Endothelial cell of umbilical vein (primary cell): ENCODE measurements at regions of chr4 and their contacts with region 1.

Region 1: DNA sequence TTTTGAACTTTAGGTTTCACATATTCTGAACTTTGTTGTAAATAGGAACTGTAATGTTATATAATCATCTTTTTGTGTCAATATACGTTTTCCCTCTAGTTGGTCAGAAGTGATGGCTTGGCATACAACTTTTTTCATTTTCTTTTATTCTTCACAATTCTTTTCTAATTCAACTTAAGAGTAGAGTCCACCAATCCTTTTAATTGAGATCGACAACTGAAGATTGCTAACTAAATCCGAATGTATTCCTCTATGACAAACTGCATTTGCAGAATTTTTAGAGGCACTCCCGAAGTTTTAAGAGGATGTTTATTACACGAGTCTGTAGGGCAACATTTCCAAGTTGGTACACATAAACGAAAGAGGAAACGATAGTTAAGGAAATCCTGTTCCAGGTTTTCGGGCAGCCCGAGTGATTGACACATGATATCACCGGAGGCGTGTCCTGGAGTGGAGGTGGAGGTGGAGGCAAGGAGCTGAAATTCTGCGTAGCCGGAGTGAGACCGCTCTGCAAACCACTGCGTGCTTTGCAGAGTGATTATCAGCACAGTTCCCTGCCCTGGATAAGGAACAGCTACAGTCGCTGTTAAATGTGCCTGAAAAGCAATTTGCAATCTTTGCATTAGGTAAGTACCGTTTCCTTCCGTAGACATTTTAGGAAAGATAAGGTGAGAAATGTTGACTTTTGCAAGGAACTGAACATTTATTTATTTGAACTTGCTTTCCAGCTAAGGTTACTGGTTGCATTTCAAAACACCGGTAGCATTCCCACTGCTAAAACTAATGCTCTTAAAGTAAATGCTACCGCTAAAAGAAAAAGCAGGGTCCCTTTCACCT is at the start of gene SPRY1:
- DNase-seq: peak; percentile 89
- H3K4me3 ChIP-seq: peak within 1 kb of the TSS; percentile 27 to 84 (median 49)
- H3K27ac ChIP-seq: peak within 1 kb of the TSS; percentile 53
- H3K4me1 ChIP-seq: peaks cover 15% of the 10 kb centered on the region
- H3K27me3 ChIP-seq: no peaks in the 10 kb centered on the region
- CTCF ChIP-seq: no peak
- POLR2A ChIP-seq: peak; percentile 68
- total RNA-seq, gene SPRY1: 43.7 and 59.6 TPM in 2 replicates

Region 2: DNA sequence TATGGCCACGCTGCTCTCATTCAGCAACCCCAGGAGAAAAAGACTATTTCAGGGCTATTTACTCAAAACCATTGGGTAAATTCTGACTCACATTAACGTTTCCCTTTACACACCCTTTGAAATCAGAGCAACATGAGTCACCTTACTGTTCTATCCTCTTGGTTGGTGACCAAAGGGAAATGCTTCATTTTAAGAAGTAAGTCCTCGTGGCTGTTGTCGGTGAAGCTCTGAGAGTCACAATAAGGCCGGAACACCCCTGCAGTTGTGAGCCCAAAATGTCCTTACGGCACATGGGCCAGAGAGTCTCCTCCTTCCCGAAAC is 56.2 kb before region 1 on chr4:
- CTCF ChIA-PET with region 1: interaction called, 3 read pairs
- POLR2A ChIA-PET with region 1: no interaction called
- dilution Hi-C with region 1: no loop called
- intact Hi-C with region 1: loop called (anchors 1 kb)
- DNase-seq: peak; percentile 92
- H3K4me3 ChIP-seq: no peak overlapping the region
- H3K27ac ChIP-seq: peak overlapping the region; percentile 90
- H3K4me1 ChIP-seq: peaks cover 58% of the 10 kb centered on the region
- H3K27me3 ChIP-seq: no peaks in the 10 kb centered on the region
- CTCF ChIP-seq: no peak
- POLR2A ChIP-seq: peak; percentile 29

Region 3: GRCh38 chr4:123444290-123444731 is 47.8 kb after region 1 on chr4:
- CTCF ChIA-PET with region 1: interaction called, 5 read pairs
- POLR2A ChIA-PET with region 1: no interaction called
- dilution Hi-C with region 1: no loop called
- intact Hi-C with region 1: loop called (anchors 2 kb)
- DNase-seq: peak; percentile 75
- H3K4me3 ChIP-seq: no peak overlapping the region
- H3K27ac ChIP-seq: peak overlapping the region; percentile 45
- H3K4me1 ChIP-seq: peaks cover 22% of the 10 kb centered on the region
- H3K27me3 ChIP-seq: no peaks in the 10 kb centered on the region
- CTCF ChIP-seq: no peak
- POLR2A ChIP-seq: no peak

Region 4: GRCh38 chr4:123564758-123565346 is 168.3 kb after region 1 on chr4:
- CTCF ChIA-PET with region 1: interaction called, 28 read pairs
- POLR2A ChIA-PET with region 1: no interaction called
- dilution Hi-C with region 1: no loop called
- intact Hi-C with region 1: loop called (anchors 2 kb)
- DNase-seq: peak; percentile 74
- H3K4me3 ChIP-seq: no peak overlapping the region
- H3K27ac ChIP-seq: no peak overlapping the region
- H3K4me1 ChIP-seq: peaks cover 5% of the 10 kb centered on the region
- H3K27me3 ChIP-seq: peaks cover 2 to 5% of the 10 kb centered on the region in 2 experiments
- CTCF ChIP-seq: peak; percentile 81 to 84
- POLR2A ChIP-seq: no peak

Region 5: DNA sequence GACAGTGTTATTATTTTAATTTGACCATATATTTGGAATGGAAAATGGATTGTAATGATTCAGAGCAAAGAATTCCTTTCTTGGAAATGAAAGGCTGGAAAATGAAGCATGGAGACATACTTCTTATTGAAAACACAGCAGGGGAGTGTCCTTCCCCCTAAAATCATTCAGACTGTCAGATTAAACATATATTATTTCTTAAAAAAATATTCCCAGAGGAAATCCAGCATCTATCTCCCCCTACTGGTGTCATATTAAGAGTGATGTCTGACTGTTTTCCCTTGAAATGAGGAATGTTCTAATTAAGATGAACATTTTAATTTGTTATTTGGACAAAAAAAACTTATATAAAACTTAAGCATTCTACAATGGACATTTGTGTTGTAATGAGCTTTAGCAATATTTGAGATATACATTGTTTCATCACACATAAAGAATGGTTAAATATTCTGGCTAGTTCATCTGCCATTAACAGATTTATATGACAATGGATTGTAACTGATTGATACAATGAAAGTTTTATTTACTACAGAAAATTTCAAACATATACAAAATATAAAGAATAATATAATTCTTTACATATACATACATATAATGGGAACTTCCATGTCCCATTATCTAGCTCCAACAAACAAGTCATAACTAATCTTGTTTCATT is 264.7 kb after region 1 on chr4:
- CTCF ChIA-PET with region 1: interaction called, 16 read pairs
- POLR2A ChIA-PET with region 1: no interaction called
- dilution Hi-C with region 1: no loop called
- intact Hi-C with region 1: loop called (anchors 1 kb)
- DNase-seq: peak; percentile 49
- H3K4me3 ChIP-seq: no peak overlapping the region
- H3K27ac ChIP-seq: no peak overlapping the region
- H3K4me1 ChIP-seq: no peaks in the 10 kb centered on the region
- H3K27me3 ChIP-seq: no peaks in the 10 kb centered on the region
- CTCF ChIP-seq: peak; percentile 27 to 37
- POLR2A ChIP-seq: no peak

Region 6: DNA sequence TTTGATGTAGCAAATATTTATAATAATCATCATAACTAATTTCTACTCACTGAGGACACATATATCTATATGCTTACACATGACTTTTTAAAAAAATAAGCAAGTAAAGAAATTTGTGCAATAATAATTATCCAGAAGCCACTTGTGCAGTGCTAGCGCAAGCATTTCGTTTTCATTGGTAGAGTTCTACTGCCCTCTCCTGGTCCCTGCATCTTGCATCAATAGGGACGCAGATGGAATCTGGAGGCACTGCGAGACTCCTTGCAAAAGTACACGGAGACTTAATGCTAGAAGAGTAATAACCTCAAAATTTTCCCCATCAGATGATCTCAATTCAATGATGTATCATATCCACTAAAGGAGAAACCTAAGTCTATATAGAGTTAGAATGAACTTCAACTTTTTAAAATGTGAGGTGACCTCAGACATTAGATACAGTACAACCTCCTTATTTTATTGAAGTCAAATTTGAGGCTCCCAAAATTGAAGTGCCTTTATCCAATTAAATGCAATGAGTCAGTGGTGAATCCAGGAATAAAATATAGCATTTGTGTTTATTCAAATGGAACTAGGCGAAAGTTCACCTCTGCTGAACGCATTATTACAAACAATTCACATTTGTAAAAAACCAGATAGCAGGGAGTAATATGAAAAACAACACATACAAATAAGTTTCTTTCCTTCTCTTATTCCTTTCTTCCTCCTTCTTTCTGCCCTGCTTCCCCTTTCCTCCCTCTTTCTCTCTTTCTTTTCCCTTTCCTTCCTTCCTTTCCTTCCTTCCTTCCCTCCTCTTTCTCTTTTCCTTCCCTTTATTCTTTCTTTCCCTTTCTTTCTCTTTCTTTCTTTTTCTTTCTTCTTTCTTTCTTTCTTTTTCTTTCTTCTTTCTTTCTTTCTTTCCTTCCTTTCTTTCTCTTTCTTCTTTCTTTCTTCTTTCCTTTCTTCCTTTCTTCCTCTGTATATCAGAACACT is 866.0 kb after region 1 on chr4:
- CTCF ChIA-PET with region 1: no interaction called
- POLR2A ChIA-PET with region 1: no interaction called
- dilution Hi-C with region 1: no loop called
- intact Hi-C with region 1: loop called (anchors 5 kb)
- DNase-seq: peak; percentile 86
- H3K4me3 ChIP-seq: no peak overlapping the region
- H3K27ac ChIP-seq: no peak overlapping the region
- H3K4me1 ChIP-seq: no peaks in the 10 kb centered on the region
- H3K27me3 ChIP-seq: no peaks in the 10 kb centered on the region
- CTCF ChIP-seq: peak; percentile 70 to 87
- POLR2A ChIP-seq: no peak